ENCODE measurements at regions of chr1 and their contacts with region 1.

Region 1: GRCh38 chr1:209601809-209602657 is 18.5 kb downstream of the CAMK1G start:
- DNase-seq: peak; percentile 45
- H3K4me3 ChIP-seq: no peak overlapping the region
- H3K27ac ChIP-seq: no peak overlapping the region
- H3K4me1 ChIP-seq: peaks cover 5% of the 10 kb centered on the region
- H3K27me3 ChIP-seq: peaks cover 3 to 18% of the 10 kb centered on the region in 2 experiments
- CTCF ChIP-seq: peak; percentile 62 to 66
- POLR2A ChIP-seq: no peak

Region 2: GRCh38 chr1:209576798-209577197 is 25.2 kb before region 1 on chr1:
- CTCF ChIA-PET with region 1: interaction called, 13 read pairs
- POLR2A ChIA-PET with region 1: no interaction called
- dilution Hi-C with region 1: no loop called
- intact Hi-C with region 1: no loop called
- DNase-seq: peak; percentile 72
- H3K4me3 ChIP-seq: no peak overlapping the region
- H3K27ac ChIP-seq: no peak overlapping the region
- H3K4me1 ChIP-seq: peaks cover 8% of the 10 kb centered on the region
- H3K27me3 ChIP-seq: peaks cover 13 to 17% of the 10 kb centered on the region in 2 experiments
- CTCF ChIP-seq: peak; percentile 94 to 95
- POLR2A ChIP-seq: no peak

Region 3: DNA sequence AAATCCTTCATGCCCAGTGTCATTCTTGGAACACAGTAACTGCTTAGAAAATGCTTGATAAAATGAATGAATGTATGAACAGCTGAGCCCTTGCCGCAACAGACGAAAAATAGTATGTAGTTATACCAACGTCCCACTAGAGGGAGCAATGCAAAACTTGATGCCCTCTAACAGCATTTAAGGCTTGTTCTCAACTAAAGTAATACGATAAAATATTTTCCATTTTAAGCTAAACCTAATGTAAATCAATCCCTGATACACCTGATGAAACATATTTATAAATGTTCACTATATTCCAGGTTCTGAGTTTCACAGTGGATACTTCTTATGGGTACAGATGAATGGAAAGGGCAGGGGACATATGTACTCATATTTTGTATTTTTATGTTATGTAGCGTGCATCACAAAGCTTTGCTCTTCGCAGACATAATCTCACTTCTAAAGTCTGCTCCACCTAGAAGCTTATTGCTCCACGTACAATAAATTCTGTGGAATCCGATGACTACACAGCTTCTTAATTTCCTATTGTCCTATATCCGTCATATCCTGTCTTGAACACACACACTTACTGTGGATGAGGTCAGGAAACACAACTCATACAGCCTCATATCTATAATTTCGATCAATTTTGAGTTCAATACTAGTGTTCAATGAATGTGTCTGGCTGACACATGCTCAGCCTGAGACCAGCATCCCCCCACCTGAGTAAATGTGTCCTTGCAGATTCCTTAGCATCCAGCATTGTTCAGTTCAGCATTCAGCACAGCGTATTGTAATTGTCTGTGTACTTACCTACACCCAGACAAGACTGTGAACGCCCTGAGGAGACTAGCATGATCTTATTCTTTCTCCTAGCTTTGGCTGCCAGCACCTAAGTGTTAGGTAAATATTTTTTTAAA is 221.4 kb after region 1 on chr1:
- CTCF ChIA-PET with region 1: no interaction called
- POLR2A ChIA-PET with region 1: no interaction called
- dilution Hi-C with region 1: no loop called
- intact Hi-C with region 1: no loop called
- DNase-seq: peak; percentile 90
- H3K4me3 ChIP-seq: peak overlapping the region in 1 of 3 experiments; percentile 51
- H3K27ac ChIP-seq: peak overlapping the region; percentile 97
- H3K4me1 ChIP-seq: peaks cover 31% of the 10 kb centered on the region
- H3K27me3 ChIP-seq: no peaks in the 10 kb centered on the region
- CTCF ChIP-seq: peak; percentile 56 to 60
- POLR2A ChIP-seq: peak; percentile 80

Measured in endothelial cell of umbilical vein (primary cell).